ENCODE measurements at regions of chr6 and their contacts with region 1.

Region 1: DNA sequence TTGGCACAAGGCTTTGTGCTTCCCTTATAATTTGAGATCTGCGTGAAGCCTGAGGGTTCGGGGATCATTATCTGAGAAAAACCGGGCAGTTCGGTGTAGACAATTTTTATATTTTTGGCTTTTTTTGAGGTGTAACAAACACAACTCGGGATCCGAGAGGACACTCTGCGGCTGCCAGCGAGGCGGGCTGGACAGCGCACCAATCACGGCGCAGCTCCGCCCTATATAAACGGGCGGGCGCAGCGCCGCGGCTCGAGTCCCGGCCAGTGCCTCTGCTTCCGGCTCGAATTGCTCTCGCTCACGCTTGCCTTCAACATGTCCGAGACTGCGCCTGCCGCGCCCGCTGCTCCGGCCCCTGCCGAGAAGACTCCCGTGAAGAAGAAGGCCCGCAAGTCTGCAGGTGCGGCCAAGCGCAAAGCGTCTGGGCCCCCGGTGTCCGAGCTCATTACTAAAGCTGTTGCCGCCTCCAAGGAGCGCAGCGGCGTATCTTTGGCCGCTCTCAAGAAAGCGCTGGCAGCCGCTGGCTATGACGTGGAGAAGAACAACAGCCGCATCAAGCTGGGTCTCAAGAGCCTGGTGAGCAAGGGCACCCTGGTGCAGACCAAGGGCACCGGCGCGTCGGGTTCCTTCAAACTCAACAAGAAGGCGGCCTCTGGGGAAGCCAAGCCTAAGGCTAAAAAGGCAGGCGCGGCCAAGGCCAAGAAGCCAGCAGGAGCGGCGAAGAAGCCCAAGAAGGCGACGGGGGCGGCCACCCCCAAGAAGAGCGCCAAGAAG is 69.0 kb downstream of the HFE start:
- DNase-seq: peak; percentile 78 to 83
- ATAC-seq: peak; percentile 59 to 70
- H3K4me3 ChIP-seq: peak overlapping the region; percentile 72
- H3K27ac ChIP-seq: peak overlapping the region; percentile 91 to 95
- H3K4me1 ChIP-seq: peaks cover 35% of the 10 kb centered on the region
- CTCF ChIP-seq: no peak
- EP300 ChIP-seq: no peak
- POLR2A ChIP-seq: peak; percentile 98
- RAD21 ChIP-seq: 0 out of 5 replicates have a peak, but pooled peaks of 1 of the 2 experiments have one; percentile 11

Region 2: GRCh38 chr6:25866011-25866410 is 290.3 kb before region 1 on chr6:
- CTCF ChIA-PET with region 1: no interaction called
- POLR2A ChIA-PET with region 1: no interaction called
- DNase-seq: no peak
- ATAC-seq: no peak
- H3K4me3 ChIP-seq: no peak overlapping the region
- H3K27ac ChIP-seq: no peak overlapping the region
- H3K4me1 ChIP-seq: no peaks in the 10 kb centered on the region
- CTCF ChIP-seq: no peak
- EP300 ChIP-seq: no peak
- POLR2A ChIP-seq: no peak
- RAD21 ChIP-seq: no peak

Region 3: DNA sequence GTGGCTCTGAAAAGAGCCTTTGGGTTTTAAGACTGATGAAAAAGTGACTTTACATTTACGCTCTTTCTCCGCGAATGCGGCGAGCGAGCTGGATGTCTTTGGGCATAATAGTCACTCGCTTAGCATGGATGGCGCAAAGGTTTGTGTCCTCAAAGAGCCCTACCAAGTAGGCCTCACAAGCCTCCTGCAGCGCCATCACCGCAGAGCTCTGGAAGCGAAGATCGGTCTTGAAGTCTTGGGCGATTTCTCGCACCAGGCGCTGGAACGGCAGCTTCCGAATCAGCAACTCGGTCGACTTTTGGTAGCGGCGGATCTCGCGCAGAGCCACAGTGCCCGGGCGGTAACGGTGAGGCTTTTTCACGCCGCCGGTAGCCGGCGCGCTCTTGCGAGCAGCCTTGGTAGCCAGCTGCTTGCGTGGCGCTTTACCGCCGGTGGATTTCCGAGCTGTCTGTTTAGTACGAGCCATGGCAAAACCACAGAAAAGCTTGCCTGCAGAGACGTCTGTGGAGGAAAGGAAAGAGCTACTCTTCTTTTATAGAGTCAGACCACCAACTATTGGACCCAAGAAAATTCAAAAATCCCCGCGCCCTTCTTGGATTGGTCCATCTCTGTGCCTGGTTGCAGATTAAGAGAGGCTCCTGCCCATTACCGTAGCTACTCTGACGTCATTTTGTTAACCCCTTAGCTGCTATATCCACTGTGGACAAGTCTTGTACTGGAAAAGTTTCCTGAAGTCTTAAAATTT is 124.5 kb before region 1 on chr6:
- CTCF ChIA-PET with region 1: no interaction called
- POLR2A ChIA-PET with region 1: interaction called, 35 read pairs
- DNase-seq: peak; percentile 86 to 97
- ATAC-seq: peak; percentile 68 to 78
- H3K4me3 ChIP-seq: peak overlapping the region; percentile 56
- H3K27ac ChIP-seq: peak overlapping the region; percentile 95 to 100
- H3K4me1 ChIP-seq: peaks cover 38% of the 10 kb centered on the region
- CTCF ChIP-seq: no peak
- EP300 ChIP-seq: no peak
- POLR2A ChIP-seq: peak; percentile 96
- RAD21 ChIP-seq: no peak

Region 4: GRCh38 chr6:26103770-26104456 is 52.4 kb before region 1 on chr6:
- CTCF ChIA-PET with region 1: interaction called, 3 read pairs
- POLR2A ChIA-PET with region 1: interaction called, 18 read pairs
- DNase-seq: peak; percentile 57 to 93
- ATAC-seq: peak; percentile 88 to 93
- H3K4me3 ChIP-seq: peak overlapping the region; percentile 43
- H3K27ac ChIP-seq: peak overlapping the region; percentile 87 to 92
- H3K4me1 ChIP-seq: peaks cover 19% of the 10 kb centered on the region
- CTCF ChIP-seq: peak; percentile 18; the same call in 2 of the 3 replicates
- EP300 ChIP-seq: peak; percentile 51 to 56; a peak in 2 of 5 replicates
- POLR2A ChIP-seq: peak; percentile 99
- RAD21 ChIP-seq: 0 out of 5 replicates have a peak, but pooled peaks have one; percentile 11 to 14

Region 5: DNA sequence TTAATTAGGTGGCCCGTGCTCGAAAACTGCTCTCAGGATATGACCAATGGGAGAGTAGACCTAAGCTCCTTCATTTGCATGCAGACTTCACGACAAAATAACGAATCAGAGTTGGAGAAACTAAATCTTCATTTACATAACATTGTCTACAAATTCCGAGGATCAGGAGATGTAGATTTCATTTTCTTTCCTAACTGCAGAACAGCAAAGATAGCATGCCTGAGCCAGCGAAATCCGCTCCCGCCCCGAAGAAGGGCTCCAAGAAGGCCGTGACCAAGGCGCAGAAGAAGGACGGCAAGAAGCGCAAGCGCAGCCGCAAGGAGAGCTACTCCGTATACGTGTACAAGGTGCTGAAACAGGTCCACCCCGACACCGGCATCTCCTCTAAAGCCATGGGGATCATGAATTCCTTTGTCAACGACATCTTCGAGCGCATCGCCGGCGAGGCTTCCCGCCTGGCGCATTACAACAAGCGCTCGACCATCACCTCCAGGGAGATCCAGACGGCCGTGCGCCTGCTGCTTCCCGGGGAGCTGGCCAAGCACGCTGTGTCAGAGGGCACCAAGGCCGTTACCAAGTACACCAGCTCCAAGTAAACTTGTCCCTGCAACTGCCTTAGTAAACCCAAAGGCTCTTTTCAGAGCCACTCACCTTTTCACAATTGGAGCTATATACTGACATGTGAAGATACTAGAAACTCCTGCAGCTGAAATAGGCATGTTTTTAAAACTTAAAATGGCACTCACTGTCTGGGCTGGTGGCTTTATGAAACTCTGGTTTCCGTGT is 27.5 kb after region 1 on chr6:
- CTCF ChIA-PET with region 1: interaction called, 4 read pairs
- POLR2A ChIA-PET with region 1: interaction called, 45 read pairs
- DNase-seq: peak in 1 of 2 experiments; percentile 84
- ATAC-seq: peak; percentile 80 to 81
- H3K4me3 ChIP-seq: peak overlapping the region; percentile 43
- H3K27ac ChIP-seq: peak overlapping the region; percentile 58 to 87
- H3K4me1 ChIP-seq: peaks cover 13% of the 10 kb centered on the region; the same call in 2 of the 3 replicates
- CTCF ChIP-seq: no peak
- EP300 ChIP-seq: no peak
- POLR2A ChIP-seq: peak; percentile 44
- RAD21 ChIP-seq: no peak

Region 6: DNA sequence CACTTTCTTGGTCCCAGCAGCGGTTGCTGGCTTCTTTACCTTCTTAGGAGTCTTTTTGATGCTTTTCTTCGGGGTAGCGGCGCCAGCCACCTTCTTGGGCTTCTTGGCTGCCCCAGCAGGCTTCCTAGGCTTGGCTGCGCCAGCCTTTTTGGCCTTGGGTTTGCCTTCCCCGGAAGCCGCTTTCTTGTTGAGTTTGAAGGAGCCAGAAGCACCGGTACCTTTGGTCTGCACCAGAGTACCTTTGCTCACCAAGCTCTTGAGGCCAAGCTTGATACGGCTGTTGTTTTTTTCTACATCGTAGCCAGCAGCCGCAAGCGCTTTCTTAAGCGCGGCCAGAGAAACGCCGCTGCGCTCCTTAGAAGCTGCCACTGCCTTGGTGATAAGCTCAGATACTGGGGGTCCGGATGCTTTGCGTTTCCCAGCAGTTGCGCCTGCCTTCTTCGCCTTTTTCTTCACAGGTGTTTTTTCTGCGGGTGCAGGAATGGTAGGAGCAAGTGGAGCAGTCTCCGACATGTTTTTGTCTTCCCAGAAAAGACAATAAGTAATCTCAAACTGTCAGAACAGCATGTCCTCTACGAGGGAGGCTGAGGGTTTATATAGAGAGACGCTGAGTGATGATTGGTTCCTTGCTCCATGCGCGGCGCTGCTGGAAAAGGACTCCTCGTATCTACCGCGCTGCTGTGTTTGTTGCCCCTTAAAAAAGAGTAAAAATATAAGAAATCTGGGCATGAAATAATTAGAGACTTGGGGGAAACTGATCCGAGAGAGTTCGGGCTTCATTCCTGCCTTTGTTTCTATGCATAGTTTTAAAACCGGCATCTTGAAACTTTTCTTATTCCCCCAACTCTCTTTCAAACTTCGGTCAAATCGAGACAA is 78.4 kb after region 1 on chr6:
- CTCF ChIA-PET with region 1: no interaction called
- POLR2A ChIA-PET with region 1: interaction called, 20 read pairs
- DNase-seq: peak; percentile 80 to 89
- ATAC-seq: peak; percentile 85 to 87
- H3K4me3 ChIP-seq: peak overlapping the region; percentile 56
- H3K27ac ChIP-seq: peak overlapping the region; percentile 94 to 98
- H3K4me1 ChIP-seq: peaks cover 22% of the 10 kb centered on the region
- CTCF ChIP-seq: no peak
- EP300 ChIP-seq: no peak
- POLR2A ChIP-seq: peak; percentile 37; the same call in 1 of the 2 replicates
- RAD21 ChIP-seq: no peak

Region 7: GRCh38 chr6:26295691-26296555 is 139.7 kb after region 1 on chr6:
- CTCF ChIA-PET with region 1: no interaction called
- POLR2A ChIA-PET with region 1: no interaction called
- DNase-seq: peak in 1 of 2 experiments; percentile 71
- ATAC-seq: peak; percentile 85 to 90
- H3K4me3 ChIP-seq: no peak overlapping the region; the same call in 2 of the 3 replicates
- H3K27ac ChIP-seq: peak overlapping the region; percentile 67; a peak in 5 of 6 replicates
- H3K4me1 ChIP-seq: peaks cover 25% of the 10 kb centered on the region
- CTCF ChIP-seq: no peak
- EP300 ChIP-seq: no peak
- POLR2A ChIP-seq: no peak
- RAD21 ChIP-seq: no peak